Kidney (tissue), 22 donors: ENCODE measurements at regions of chr6 and their contacts with region 1.

Region 1: GRCh38 chr6:56708810-56709597 is 66.3 kb upstream of the DST start:
- DNase-seq: peak in 2 of 5 donors; percentile 48 to 58
- H3K4me3 ChIP-seq: no peak overlapping the region
- H3K27ac ChIP-seq: no peak overlapping the region
- H3K4me1 ChIP-seq: no peaks in the 10 kb centered on the region
- H3K27me3 ChIP-seq: no peaks in the 10 kb centered on the region
- CTCF ChIP-seq: peak; percentile 50

Region 2: GRCh38 chr6:56843573-56844349 is 134.8 kb after region 1 on chr6:
- intact Hi-C with region 1: loop called (anchors 10 kb)
- DNase-seq: peak; percentile 83 to 89 (median 89)
- H3K4me3 ChIP-seq: peak overlapping the region; percentile 25 to 60 (median 46)
- H3K27ac ChIP-seq: peak overlapping the region in 1 of 2 donors; percentile 8
- H3K4me1 ChIP-seq: no peaks in the 10 kb centered on the region
- H3K27me3 ChIP-seq: no peaks in the 10 kb centered on the region
- CTCF ChIP-seq: peak; percentile 21